PC-9 (cell line): ENCODE measurements at regions of chr10 and their contacts with region 1.

Region 1: DNA sequence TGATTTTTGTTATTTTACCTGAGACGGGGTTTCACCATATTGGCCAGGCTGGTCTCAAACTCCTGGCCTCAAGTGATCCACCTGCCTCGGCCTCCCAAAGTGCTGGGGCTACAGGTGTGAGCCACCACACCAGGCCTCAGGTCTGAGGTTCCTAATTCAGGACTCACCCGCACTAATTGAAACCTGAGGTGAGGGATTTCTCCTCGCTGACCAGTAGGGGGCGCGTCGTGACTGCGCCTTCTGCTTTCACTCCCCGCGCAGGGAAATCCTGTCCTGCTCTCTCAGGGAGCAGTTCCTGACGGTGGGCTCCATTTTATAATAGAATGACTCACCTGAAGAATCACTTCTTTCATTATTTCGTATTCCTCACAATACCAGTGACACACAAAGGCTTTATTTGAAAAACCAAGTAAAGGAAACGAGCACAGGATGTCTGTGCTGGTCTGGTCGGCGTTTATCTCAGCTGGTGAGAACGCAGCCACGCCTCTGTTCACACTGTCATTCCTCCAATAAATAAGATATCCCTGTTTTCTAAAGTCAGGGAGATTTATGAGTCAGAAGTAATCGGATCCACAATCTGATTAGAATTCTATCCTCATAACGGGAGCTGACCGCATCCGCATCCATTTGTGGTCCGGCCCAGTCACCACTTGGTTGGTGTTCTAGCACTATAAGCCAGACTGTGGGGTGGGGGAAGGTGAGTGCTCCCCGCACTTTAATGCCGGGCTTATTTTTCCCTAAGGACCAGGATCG is 35.4 kb downstream of the BAG3 start:
- DNase-seq: peak; percentile 70 to 88
- H3K4me3 ChIP-seq: peak overlapping the region; percentile 50; the same call in 1 of the 2 replicates
- H3K27ac ChIP-seq: peak overlapping the region; percentile 93
- H3K4me1 ChIP-seq: peaks cover 37% of the 10 kb centered on the region
- H3K27me3 ChIP-seq: no peaks in the 10 kb centered on the region
- CTCF ChIP-seq: peak; percentile 88

Region 2: DNA sequence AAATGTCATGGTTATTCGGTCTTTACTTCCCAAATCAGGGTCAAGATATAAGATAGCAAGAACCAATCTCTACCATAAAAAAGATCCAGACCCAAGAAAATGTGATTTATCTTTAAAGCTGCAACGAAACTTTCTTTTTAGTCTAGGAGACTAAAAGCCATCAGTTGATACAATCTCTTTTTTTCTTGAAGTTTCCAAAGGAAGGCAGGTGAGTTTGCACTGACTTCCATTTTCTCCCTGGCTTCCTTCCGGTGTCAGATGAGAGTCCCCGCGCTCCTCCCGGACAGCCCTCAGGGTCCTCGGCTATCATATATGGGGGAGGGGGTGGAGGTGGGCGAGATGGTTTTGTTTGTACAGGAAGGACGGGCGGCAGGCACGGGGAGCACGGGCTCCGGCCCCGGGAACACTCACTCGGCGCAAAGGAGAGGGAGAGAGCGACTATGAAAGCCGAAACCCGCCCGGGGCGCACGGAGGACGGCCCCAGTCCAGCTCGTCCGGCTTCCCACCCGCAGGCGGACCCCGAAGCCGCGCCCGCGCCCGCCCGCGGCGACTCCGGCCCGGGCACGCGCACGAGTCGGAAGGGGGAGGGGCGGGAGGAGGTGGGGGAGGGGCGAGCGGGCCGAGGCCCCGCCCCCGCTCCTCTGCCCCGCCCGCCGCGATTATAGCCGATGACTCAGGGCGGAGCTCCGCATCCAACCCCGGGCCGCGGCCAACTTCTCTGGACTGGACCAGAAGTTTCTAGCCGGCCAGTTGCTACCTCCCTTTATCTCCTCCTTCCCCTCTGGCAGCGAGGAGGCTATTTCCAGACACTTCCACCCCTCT is 35.7 kb before region 1 on chr10 and contains the start of gene BAG3:
- CTCF ChIA-PET with region 1: interaction called, 4 read pairs
- POLR2A ChIA-PET with region 1: interaction called, 10 read pairs
- intact Hi-C with region 1: loop called (anchors 1 kb)
- DNase-seq: peak; percentile 73 to 78
- H3K4me3 ChIP-seq: peak within 1 kb of the TSS; percentile 87
- H3K27ac ChIP-seq: peak within 1 kb of the TSS; percentile 75
- H3K4me1 ChIP-seq: peaks cover 32% of the 10 kb centered on the region
- H3K27me3 ChIP-seq: no peaks in the 10 kb centered on the region
- CTCF ChIP-seq: no peak
- total RNA-seq, gene BAG3: 62.7 and 75.7 TPM in 2 replicates

Region 3: DNA sequence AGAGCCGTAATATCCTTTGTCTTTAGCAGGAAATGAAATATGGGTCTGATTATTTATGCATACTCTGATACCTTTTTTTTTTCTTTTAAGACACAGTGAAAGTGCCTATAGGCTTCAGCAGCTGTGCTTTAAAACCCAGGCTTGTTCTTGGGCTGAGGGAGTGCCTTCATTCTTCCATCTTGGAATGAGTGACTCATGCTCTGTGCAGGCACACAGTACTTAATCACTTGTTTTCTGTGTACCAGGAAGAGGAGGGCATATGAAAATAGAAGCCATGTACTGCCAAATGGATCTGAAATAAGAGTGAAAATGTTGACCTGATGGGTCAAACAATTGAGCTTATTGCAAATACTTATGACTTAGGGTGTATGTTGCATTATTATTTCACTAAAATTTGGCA is 51.2 kb after region 1 on chr10:
- CTCF ChIA-PET with region 1: interaction called, 4 read pairs
- POLR2A ChIA-PET with region 1: no interaction called
- intact Hi-C with region 1: loop called (anchors 2 kb)
- DNase-seq: peak; percentile 59 to 91
- H3K4me3 ChIP-seq: peak overlapping the region; percentile 32; the same call in 1 of the 2 replicates
- H3K27ac ChIP-seq: peak overlapping the region; percentile 80
- H3K4me1 ChIP-seq: peaks cover 40% of the 10 kb centered on the region
- H3K27me3 ChIP-seq: no peaks in the 10 kb centered on the region
- CTCF ChIP-seq: no peak

Region 4: GRCh38 chr10:119849031-119849789 is 162.6 kb after region 1 on chr10:
- CTCF ChIA-PET with region 1: no interaction called
- POLR2A ChIA-PET with region 1: interaction called, 3 read pairs
- intact Hi-C with region 1: loop called (anchors 2 kb)
- DNase-seq: peak; percentile 22 to 40
- H3K4me3 ChIP-seq: no peak overlapping the region
- H3K27ac ChIP-seq: 0 out of 2 replicates have a peak overlapping the region, but pooled peaks have one; percentile 37
- H3K4me1 ChIP-seq: no peaks in the 10 kb centered on the region
- H3K27me3 ChIP-seq: no peaks in the 10 kb centered on the region
- CTCF ChIP-seq: no peak